ENCODE measurements at regions of chrX and their contacts with region 1.

Region 1: DNA sequence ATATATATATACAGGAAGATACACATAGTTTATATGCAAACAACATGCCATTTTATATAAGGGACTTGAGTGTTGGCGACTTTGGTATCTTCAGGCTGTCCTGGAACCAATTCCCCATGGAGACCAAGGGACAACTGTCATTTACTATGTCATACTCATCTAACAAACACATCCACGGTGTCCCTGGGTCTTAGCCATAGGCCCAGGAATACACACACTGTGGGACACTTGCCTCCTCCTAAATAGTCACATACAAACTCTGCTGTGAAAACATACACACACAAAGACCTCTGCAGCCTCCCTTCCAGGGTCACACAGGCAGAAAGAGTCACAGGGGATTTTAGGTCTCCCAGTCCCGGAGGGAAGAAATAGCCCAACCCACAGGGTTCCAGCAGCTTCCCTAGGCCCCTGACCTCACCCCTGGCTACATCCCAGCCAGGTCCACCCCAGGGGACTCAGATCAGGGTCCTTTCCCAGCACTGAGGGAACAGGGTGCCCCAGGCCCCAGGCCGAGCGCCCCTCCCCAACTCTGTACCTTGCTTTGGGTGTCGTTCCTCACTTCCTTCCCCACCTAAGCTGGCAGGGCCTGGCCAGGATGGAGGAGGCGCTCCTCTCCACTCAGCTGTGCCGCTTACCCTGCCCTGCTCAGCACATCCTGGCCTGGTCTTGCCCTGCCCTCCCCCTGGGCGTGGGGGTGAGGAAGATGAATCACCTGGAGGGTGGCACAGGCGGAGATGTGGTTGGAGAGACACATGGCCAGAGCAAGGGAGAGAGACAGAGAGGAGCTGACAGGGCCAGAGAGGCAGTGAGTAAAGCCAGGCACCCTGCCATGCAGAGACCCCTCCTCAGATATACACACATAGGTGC is 21.8 kb downstream of the FGD1 start:
- DNase-seq: no peak
- H3K4me3 ChIP-seq: no peak overlapping the region
- CTCF ChIP-seq: no peak
- POLR2A ChIP-seq: no peak

Region 2: GRCh38 chrX:52857694-52858093 is 1616.5 kb before region 1 on chrX:
- intact Hi-C with region 1: no loop called
- DNase-seq: no peak
- H3K4me3 ChIP-seq: no peak overlapping the region
- CTCF ChIP-seq: no peak
- POLR2A ChIP-seq: no peak

Region 3: GRCh38 chrX:53476371-53476770 is 997.9 kb before region 1 on chrX:
- intact Hi-C with region 1: no loop called
- DNase-seq: no peak
- H3K4me3 ChIP-seq: no peak overlapping the region
- CTCF ChIP-seq: no peak
- POLR2A ChIP-seq: no peak

Region 4: DNA sequence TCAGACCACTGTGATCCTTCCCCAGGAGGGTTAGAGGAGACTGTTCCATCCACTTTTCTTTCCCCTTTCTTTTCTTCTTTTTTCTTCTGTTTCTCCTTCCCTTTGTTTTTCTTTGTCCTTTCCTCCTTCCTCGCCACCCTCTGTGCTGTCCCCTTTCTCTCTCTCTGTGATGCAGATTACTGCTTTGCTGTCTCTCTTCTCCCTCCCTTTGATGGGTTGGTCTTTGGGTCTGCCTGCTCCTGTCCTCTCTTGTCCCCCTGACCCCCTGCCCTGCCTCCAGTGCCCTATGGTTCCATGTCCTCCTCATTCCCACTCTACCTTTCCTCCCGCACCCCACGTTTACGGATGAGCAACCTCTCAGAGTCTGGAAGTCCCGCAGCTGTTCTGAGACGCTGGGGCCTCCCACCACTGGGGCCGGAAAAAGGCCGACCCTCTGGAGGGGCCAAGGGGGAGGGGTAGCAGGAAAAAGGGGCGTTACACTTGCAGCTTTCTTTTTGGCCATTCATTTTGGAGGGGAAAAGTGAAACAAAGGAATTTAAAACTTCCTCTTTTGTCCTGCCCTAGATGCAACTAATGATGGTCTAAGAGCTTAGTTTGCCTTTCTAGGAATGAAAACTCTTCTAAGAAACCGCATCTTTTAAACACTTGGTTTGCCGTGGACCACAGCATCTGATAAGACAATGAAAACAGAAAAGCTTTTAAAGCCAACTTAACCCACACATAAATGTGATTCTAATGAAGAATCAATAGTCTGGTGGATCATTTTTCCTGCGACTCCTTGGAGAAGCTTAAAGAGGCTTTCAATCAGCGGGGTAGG is 58.5 kb before region 1 on chrX:
- intact Hi-C with region 1: no loop called
- DNase-seq: no peak
- H3K4me3 ChIP-seq: no peak overlapping the region
- CTCF ChIP-seq: no peak
- POLR2A ChIP-seq: no peak

Region 5: DNA sequence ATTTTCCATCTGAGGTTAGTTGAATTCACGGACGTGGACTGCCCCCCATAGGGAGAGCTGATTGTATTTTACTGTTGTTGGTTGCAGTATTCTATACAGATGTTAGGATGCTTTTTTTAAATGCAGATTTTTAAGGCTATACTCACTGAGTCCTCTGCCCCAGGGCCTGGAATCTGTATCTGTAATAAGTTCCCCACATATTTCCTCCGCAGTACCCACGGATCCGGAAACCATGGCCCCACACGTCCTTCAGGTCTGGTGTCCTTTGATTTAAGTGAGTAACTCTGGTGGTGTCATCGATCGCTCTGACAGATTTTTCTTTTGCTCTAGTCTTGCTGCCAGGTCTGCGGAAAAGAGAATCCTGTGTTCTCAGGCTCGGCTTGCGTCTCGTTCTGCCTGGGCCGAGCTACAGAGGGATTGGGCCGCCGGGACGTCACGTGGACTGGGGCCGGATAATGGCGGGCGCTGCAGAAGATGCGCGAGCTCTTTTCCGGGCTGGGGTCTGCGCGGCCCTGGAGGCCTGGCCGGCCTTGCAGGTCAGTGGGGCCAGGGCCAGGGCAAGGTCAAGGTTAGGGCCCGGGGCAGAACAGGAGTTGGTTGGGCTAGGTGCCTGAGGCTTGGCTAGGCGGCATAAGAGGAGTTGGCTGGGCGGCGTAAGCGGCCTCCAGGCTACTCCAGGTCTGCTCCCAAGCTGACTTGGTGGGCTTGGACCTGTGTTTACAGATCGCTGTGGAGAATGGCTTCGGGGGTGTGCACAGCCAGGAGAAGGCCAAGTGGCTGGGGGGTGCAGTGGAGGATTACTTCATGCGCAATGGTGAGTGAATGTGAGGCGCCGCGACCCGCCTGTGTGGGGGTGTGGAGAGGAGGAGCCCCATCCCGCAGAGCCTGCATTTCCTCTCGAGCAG is 34.0 kb before region 1 on chrX and contains the start of gene TSR2:
- intact Hi-C with region 1: no loop called
- DNase-seq: peak; percentile 75 to 94
- H3K4me3 ChIP-seq: peak within 1 kb of the TSS; percentile 79
- CTCF ChIP-seq: no peak
- POLR2A ChIP-seq: no peak
- total RNA-seq, gene TSR2: 20.2 to 26.8 (median 23.0) TPM

Region 6: DNA sequence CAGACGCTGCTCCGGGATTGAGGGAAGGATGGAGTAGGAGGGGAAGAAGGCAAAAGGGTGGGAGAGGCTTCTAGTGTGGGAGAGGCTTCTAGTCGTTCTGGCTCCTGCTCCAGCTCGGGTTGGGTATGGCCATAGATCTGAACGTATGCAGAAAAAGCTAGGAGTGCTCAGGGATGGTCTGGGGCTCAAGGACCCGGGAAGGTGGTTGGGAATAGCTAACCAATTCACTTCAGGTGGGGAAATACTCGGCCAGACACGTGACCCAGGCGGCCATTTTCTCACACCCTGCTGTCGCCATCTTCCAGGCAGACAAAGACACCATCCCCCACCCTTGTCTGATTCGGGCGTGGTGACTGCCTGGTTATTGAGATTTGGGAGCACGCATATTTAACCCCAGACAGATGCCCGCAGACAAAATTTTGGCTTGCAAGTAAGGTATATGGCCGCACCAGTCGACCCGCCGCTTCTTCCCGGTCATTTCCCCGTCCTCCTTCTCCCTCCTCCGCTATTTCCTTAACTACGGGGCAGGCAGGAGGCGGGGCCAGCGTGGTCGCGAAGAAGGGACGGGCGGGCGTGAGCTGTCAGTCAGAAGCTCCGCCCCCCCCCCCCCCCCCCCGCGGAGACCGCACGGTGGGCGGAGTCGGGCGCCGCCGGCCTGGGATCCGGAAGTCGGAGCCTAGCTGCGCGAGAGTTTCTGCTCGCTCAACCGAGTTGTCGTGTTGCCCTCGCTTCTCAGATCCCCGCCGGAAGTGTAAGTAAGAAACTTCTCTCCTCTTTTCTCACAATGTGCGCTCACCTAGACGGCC is 55.5 kb after region 1 on chrX and contains the start of gene GNL3L:
- intact Hi-C with region 1: loop called (anchors 10 kb)
- DNase-seq: peak; percentile 83 to 95
- H3K4me3 ChIP-seq: peak within 1 kb of the TSS; percentile 62
- CTCF ChIP-seq: no peak
- POLR2A ChIP-seq: no peak
- total RNA-seq, gene GNL3L: 22.6 to 32.1 (median 28.0) TPM